Aorta (tissue), 5 donors: ENCODE measurements at regions of chr13 and their contacts with region 1.

Region 1: DNA sequence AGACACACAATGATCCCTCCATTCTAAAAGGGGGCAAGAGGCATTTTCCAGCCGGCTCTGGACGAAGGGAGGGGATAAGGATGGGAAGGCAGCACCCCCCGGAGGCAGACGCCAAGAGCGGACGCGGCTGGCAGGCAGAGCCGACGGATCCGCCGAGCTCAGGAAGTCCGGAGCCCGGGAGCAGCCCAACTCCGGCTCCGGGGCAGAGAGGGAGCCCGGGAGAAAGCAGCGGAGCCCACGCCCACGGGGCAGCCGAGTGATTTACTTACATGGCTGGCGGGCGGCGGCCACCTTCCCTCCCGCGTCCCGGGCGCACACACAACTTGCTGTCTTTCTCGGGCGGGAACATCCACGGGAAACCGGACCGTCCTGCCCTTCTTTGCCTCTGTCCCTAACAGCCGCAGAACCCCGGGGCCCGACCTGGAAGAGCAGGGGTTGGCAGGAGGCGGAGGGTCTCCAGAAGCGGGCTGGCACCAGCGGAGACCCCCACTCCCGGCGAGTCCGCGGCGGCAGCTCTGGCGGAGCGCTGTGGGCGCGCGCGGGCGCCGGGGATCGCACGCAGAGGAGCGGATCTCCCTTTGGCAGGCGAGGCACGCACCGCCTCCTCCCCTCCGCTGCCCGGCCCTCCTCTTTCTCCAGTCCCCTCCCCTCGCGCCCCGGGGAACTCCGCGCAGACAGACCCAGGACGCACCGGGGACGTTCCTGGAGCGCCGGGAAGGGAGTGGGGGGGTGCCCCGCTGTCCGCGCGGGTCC is at the start of gene LHFPL6:
- DNase-seq: peak; percentile 92 to 95
- ATAC-seq: peak; percentile 96
- H3K4me3 ChIP-seq: peak within 1 kb of the TSS; percentile 85 to 90
- H3K27ac ChIP-seq: peak within 1 kb of the TSS; percentile 39 to 76
- H3K4me1 ChIP-seq: no peaks in the 10 kb centered on the region
- H3K27me3 ChIP-seq: no peaks in the 10 kb centered on the region
- total RNA-seq, gene LHFPL6: 211 to 214 TPM

Region 2: GRCh38 chr13:39263033-39263432 is 339.8 kb before region 1 on chr13:
- intact Hi-C with region 1: loop called in 1 of 2 experiments (anchors 5 kb)
- DNase-seq: no peak
- ATAC-seq: peak; percentile 75
- H3K4me3 ChIP-seq: no peak overlapping the region
- H3K27ac ChIP-seq: no peak overlapping the region
- H3K4me1 ChIP-seq: no peaks in the 10 kb centered on the region
- H3K27me3 ChIP-seq: no peaks in the 10 kb centered on the region

Region 3: DNA sequence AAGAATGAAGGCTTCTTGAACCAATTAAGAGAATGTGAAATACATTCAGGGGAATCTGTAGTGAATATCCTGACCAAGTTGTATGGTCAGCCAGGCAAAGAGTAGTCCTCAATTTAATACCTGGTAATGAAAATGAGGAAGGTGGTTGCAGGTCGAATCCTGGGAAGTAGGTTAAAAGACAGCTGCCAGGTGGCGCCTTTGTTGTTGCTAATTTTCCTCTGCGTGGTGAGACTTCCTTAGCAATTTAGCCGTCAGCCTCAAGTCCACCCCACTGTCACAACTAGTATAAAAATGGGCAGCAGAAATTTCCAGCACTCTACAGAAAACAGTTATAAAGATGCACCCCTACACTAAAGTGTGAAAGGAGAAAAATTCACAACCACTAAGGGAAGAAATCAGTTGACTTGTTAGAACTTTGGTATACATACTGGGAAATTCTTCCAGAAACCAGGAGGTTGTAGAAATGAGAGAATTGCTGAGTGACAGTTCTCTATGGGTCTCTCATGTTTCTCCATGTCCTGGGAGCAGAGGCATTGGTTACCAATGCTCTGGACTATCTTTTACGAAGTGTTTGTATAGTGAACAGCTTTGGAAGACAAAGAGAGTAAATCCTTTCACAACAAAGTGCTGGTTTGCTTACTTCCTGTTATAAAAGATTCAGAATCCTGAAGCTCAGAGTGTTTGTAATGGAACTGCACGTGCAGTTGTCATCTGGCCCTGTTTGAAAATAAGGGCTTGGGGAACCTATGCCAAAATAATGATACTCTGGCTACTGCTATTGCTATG is 328.6 kb before region 1 on chr13:
- intact Hi-C with region 1: loop called in 1 of 2 experiments (anchors 5 kb)
- DNase-seq: no peak
- ATAC-seq: no peak
- H3K4me3 ChIP-seq: no peak overlapping the region
- H3K27ac ChIP-seq: no peak overlapping the region
- H3K4me1 ChIP-seq: peaks cover 0 to under 1% of the 10 kb centered on the region in 2 donors
- H3K27me3 ChIP-seq: no peaks in the 10 kb centered on the region

Region 4: GRCh38 chr13:39415008-39415802 is 187.6 kb before region 1 on chr13:
- intact Hi-C with region 1: loop called (anchors 2 to 5 kb)
- DNase-seq: peak in 1 of 2 donors; percentile 54
- ATAC-seq: peak; percentile 49
- H3K4me3 ChIP-seq: peak overlapping the region in 1 of 2 donors; percentile 14
- H3K27ac ChIP-seq: peak overlapping the region; percentile 22 to 28
- H3K4me1 ChIP-seq: peaks cover 0 to 2% of the 10 kb centered on the region in 2 donors
- H3K27me3 ChIP-seq: no peaks in the 10 kb centered on the region

Region 5: GRCh38 chr13:39527961-39528660 is 74.7 kb before region 1 on chr13:
- intact Hi-C with region 1: loop called in 1 of 2 experiments (anchors 5 kb)
- DNase-seq: peak; percentile 52 to 74
- ATAC-seq: peak; percentile 60
- H3K4me3 ChIP-seq: peak overlapping the region; percentile 1 to 19
- H3K27ac ChIP-seq: peak overlapping the region; percentile 44 to 80
- H3K4me1 ChIP-seq: peaks cover 0 to 18% of the 10 kb centered on the region in 2 donors
- H3K27me3 ChIP-seq: no peaks in the 10 kb centered on the region